IMR-90 (cell line): ENCODE measurements at regions of chr12 and their contacts with region 1.

Region 1: DNA sequence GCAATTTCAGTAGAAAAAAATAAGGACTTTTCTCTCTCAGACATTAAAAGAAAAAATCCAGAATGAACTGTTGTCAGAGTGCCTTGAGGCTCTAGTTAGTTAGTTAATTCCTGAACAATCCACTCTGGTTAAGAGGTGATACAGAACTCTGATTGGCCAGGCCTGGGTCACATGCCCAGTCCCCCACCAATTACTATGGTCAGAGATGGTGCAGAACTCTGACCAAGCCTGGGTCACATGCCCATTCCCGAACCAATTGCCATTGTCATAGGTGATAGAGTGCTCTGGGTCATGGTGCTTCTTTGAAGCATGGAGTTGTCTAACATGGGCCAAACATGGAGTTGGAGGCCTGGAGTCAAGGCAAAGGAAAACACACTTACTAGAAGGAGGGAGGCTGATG is 11.1 kb upstream of the MYO1H start:
- DNase-seq: no peak
- ATAC-seq: no peak
- H3K4me3 ChIP-seq: no peak overlapping the region
- H3K27ac ChIP-seq: no peak overlapping the region
- H3K4me1 ChIP-seq: no peaks in the 10 kb centered on the region
- H3K27me3 ChIP-seq: peaks cover 6% of the 10 kb centered on the region
- CTCF ChIP-seq: no peak
- POLR2A ChIP-seq: no peak
- RAD21 ChIP-seq: no peak

Region 2: GRCh38 chr12:108649669-108650068 is 686.9 kb before region 1 on chr12:
- CTCF ChIA-PET with region 1: no interaction called
- POLR2A ChIA-PET with region 1: interaction called, 14 read pairs
- dilution Hi-C with region 1: no loop called
- in situ Hi-C with region 1: no loop called
- intact Hi-C with region 1: no loop called
- DNase-seq: peak; percentile 94
- ATAC-seq: peak; percentile 73
- H3K4me3 ChIP-seq: no peak overlapping the region
- H3K27ac ChIP-seq: peak overlapping the region; percentile 28; the same call in 1 of the 2 replicates
- H3K4me1 ChIP-seq: peaks cover 31% of the 10 kb centered on the region
- H3K27me3 ChIP-seq: no peaks in the 10 kb centered on the region
- CTCF ChIP-seq: no peak
- POLR2A ChIP-seq: no peak
- RAD21 ChIP-seq: no peak

Region 3: GRCh38 chr12:109963743-109964429 is 627.3 kb after region 1 on chr12:
- CTCF ChIA-PET with region 1: no interaction called
- POLR2A ChIA-PET with region 1: no interaction called
- dilution Hi-C with region 1: no loop called
- in situ Hi-C with region 1: no loop called
- intact Hi-C with region 1: no loop called
- DNase-seq: peak; percentile 73
- ATAC-seq: peak; percentile 86
- H3K4me3 ChIP-seq: no peak overlapping the region
- H3K27ac ChIP-seq: no peak overlapping the region
- H3K4me1 ChIP-seq: 0 out of 2 replicates have a peak, but pooled peaks cover 1% of the 10 kb centered on the region
- H3K27me3 ChIP-seq: no peaks in the 10 kb centered on the region
- CTCF ChIP-seq: no peak
- POLR2A ChIP-seq: no peak
- RAD21 ChIP-seq: no peak